Activated B cell treated with CpG ODN at 0.5 μM for 24 hours (primary cell): ENCODE measurements at regions of chr5 and their contacts with region 1.

Region 1: DNA sequence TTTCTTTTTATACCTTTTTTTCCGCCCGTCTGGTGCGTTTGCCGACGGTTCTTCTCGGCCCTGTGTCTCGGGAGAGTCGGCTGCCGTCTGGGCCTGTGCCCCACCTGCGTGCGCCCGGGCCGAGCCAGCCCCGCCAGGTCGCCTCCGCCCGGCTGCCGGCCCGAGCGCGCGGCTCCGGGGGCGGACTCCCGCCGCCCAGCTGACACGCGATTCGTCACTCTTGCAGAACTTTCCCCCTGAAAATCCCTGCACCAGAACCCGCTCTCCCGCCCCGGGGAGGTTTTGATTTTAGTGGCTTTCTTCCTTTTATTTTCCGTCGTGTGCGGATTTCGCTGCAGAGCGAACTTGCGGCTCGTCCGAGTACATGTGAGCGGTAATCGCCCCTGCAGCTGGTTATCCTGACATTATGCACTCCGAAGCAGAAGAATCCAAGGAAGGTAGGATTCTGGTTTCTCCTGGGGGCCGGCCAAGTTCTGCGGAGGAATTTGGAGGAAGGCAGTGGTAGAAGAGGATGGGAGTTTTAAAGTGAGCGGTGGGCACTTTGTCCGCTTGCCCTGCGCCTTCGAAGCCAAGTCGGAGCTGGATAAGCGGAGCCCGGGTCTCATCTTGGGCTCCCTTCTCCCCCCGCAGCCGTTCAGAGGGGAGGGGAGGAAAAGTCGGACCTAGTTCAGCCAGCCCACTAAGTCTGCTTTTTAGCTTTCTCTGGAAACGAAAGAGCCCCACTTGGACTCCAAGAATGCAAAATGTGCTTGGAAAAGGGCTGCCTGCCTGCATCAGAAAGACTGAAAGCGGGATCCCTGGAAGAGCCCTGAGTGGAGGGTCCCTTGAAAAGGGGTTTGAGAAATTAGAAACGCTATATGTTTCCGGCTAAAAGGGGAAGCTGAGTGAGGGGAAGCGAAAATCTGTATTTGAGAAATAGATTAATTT is at the start of gene TNFAIP8:
- DNase-seq: peak; percentile 70
- ATAC-seq: peak; percentile 66
- H3K4me3 Mint-ChIP-seq: peak within 1 kb of the TSS; percentile 100
- H3K27ac Mint-ChIP-seq: peak within 1 kb of the TSS; percentile 98
- H3K4me1 Mint-ChIP-seq: peaks cover 79% of the 10 kb centered on the region
- H3K27me3 Mint-ChIP-seq: no peaks in the 10 kb centered on the region
- CTCF ChIP-seq: no peak
- total RNA-seq, gene TNFAIP8: 135 and 149 TPM in 2 replicates

Region 2: DNA sequence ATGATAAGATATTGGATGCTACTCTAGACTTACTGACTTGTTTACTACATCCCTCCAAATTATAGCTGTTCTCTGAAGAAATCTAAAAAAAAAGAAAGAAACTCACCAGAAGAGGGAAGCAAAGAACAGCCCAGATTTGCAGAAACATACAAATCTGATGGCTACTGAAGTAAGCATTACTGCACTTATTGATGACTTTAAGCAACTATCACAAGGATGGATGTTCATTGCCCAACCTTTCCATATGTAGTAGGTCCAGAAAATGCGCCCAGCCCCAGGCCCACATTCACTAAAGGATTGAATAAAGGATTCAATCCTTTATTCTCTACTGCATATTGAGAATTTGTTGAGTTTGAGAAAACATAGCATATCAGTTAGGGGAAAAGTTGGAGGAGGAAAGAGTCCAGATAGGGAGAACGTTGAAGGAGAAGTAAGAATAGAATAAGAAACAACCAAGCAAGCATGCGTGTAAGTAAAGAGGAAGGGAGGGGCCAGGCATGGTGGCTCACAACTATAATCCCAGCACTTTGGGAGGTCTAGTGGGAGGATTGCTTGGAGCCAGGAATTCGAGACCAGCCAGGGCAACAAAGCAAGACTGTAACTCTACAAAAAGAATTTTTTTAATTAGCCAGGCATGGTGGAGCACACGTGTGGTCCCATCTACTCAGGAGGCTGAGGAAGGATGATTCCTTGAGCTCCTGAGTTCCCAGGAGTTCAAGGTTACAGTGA is 333.8 kb before region 1 on chr5:
- CTCF ChIA-PET with region 1: no interaction called
- POLR2A ChIA-PET with region 1: interaction called, 3 read pairs
- intact Hi-C with region 1: loop called (anchors 5 kb)
- DNase-seq: no peak
- ATAC-seq: peak; percentile 62
- H3K4me3 Mint-ChIP-seq: peak overlapping the region; percentile 45
- H3K27ac Mint-ChIP-seq: peak overlapping the region; percentile 87
- H3K4me1 Mint-ChIP-seq: peaks cover 72% of the 10 kb centered on the region
- H3K27me3 Mint-ChIP-seq: no peaks in the 10 kb centered on the region
- CTCF ChIP-seq: no peak

Region 3: GRCh38 chr5:119212676-119213075 is 143.3 kb before region 1 on chr5:
- CTCF ChIA-PET with region 1: no interaction called
- POLR2A ChIA-PET with region 1: no interaction called
- intact Hi-C with region 1: no loop called
- DNase-seq: no peak
- ATAC-seq: no peak
- H3K4me3 Mint-ChIP-seq: no peak overlapping the region
- H3K27ac Mint-ChIP-seq: no peak overlapping the region
- H3K4me1 Mint-ChIP-seq: peaks cover 2% of the 10 kb centered on the region
- H3K27me3 Mint-ChIP-seq: no peaks in the 10 kb centered on the region
- CTCF ChIP-seq: no peak

Region 4: GRCh38 chr5:119267958-119268386 is 88.0 kb before region 1 on chr5:
- CTCF ChIA-PET with region 1: interaction called, 3 read pairs
- POLR2A ChIA-PET with region 1: interaction called, 26 read pairs
- intact Hi-C with region 1: loop called (anchors 1 kb)
- DNase-seq: peak; percentile 62
- ATAC-seq: peak; percentile 65
- H3K4me3 Mint-ChIP-seq: peak overlapping the region; percentile 95
- H3K27ac Mint-ChIP-seq: peak overlapping the region; percentile 95
- H3K4me1 Mint-ChIP-seq: peaks cover 50% of the 10 kb centered on the region
- H3K27me3 Mint-ChIP-seq: no peaks in the 10 kb centered on the region
- CTCF ChIP-seq: no peak

Region 5: DNA sequence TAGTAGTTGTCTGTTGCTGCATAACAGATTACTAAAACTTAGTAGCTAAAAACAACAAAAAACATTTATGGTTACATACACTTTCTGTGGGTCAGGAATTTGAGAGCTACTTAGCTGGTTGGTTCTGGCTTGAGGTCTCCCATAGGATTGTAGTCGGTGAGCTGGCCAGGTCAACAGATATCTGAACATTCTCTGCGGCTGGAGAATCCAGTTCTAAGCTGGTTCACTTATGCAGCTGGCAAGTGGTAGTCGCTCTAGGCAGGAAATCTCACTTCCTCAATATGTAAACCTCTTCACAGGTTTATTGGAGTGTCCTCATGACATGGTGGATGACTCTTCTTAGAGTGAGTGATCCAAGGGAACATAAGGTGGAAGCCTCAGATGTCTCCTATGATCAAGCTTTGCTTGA is 65.8 kb before region 1 on chr5:
- CTCF ChIA-PET with region 1: no interaction called
- POLR2A ChIA-PET with region 1: interaction called, 21 read pairs
- intact Hi-C with region 1: no loop called
- DNase-seq: no peak
- ATAC-seq: peak; percentile 93
- H3K4me3 Mint-ChIP-seq: peak overlapping the region; percentile 75
- H3K27ac Mint-ChIP-seq: peak overlapping the region; percentile 89
- H3K4me1 Mint-ChIP-seq: peaks cover 85% of the 10 kb centered on the region
- H3K27me3 Mint-ChIP-seq: no peaks in the 10 kb centered on the region
- CTCF ChIP-seq: no peak

Region 6: GRCh38 chr5:119340597-119341218 is 15.2 kb before region 1 on chr5:
- CTCF ChIA-PET with region 1: interaction called, 6 read pairs
- POLR2A ChIA-PET with region 1: interaction called, 388 read pairs
- intact Hi-C with region 1: loop called (anchors 1 kb)
- DNase-seq: no peak
- ATAC-seq: peak; percentile 25
- H3K4me3 Mint-ChIP-seq: peak overlapping the region; percentile 79
- H3K27ac Mint-ChIP-seq: peak overlapping the region; percentile 96
- H3K4me1 Mint-ChIP-seq: peaks cover 95% of the 10 kb centered on the region
- H3K27me3 Mint-ChIP-seq: no peaks in the 10 kb centered on the region
- CTCF ChIP-seq: no peak

Region 7: DNA sequence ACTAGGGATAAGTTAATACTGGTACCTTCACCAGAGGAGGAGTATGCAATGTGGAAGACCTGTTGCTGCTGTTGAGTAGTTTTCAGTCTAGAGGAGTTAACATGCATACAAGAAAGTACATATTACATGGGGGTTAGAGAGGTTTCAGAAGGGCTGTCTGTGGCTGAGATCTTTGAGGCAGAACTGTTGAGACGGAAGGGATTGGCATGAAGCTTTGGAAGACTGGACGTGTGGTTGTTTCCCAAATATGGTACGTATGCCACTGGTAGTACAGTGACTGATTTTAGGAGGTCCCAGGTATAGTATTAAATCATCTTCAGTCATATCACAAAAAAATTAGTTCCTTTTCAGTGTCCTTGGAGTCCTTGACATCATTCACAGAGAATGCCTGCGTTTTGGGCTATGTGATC is 17.5 kb after region 1 on chr5:
- CTCF ChIA-PET with region 1: no interaction called
- POLR2A ChIA-PET with region 1: interaction called, 103 read pairs
- intact Hi-C with region 1: loop called (anchors 2 kb)
- DNase-seq: no peak
- ATAC-seq: no peak
- H3K4me3 Mint-ChIP-seq: no peak overlapping the region
- H3K27ac Mint-ChIP-seq: peak overlapping the region; percentile 62
- H3K4me1 Mint-ChIP-seq: peaks cover 73% of the 10 kb centered on the region
- H3K27me3 Mint-ChIP-seq: no peaks in the 10 kb centered on the region
- CTCF ChIP-seq: no peak

Region 8: GRCh38 chr5:119418531-119419116 is 62.7 kb after region 1 on chr5:
- CTCF ChIA-PET with region 1: interaction called, 34 read pairs
- POLR2A ChIA-PET with region 1: interaction called, 25 read pairs
- intact Hi-C with region 1: no loop called
- DNase-seq: no peak
- ATAC-seq: peak; percentile 66
- H3K4me3 Mint-ChIP-seq: peak overlapping the region; percentile 63
- H3K27ac Mint-ChIP-seq: peak overlapping the region; percentile 89
- H3K4me1 Mint-ChIP-seq: peaks cover 81% of the 10 kb centered on the region
- H3K27me3 Mint-ChIP-seq: no peaks in the 10 kb centered on the region
- CTCF ChIP-seq: no peak